Caco-2 (cell line): ENCODE measurements at regions of chr18 and their contacts with region 1.

Region 1: DNA sequence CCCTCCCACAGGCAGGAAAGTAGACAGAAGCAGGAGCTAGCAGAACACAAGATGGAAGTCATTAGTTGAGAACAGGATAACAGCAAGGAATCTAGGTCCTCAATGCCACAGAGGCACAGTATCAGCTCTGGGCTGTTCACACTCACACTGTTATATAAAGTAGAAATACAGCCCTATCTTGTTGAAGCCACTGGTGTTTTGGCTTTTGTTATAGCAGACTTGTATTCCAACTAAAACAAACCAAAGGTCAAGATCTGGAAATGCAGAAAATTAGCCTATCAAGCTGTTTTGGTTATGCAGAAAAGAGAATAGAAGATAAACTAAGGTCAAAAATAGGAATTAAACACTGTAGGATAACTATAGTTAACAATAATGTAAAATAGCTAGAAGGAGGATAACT is 37.5 kb upstream of the L3MBTL4 start:
- DNase-seq: no peak
- H3K4me3 ChIP-seq: no peak overlapping the region
- H3K4me3 Mint-ChIP-seq: no peak overlapping the region
- H3K27ac Mint-ChIP-seq: no peak overlapping the region
- H3K4me1 ChIP-seq: no peaks in the 10 kb centered on the region
- H3K4me1 Mint-ChIP-seq: peaks cover 8% of the 10 kb centered on the region
- H3K27me3 ChIP-seq: no peaks in the 10 kb centered on the region
- H3K27me3 Mint-ChIP-seq: peaks cover 8% of the 10 kb centered on the region
- CTCF ChIP-seq: no peak

Region 2: GRCh38 chr18:6355789-6356589 is 96.2 kb before region 1 on chr18:
- CTCF ChIA-PET with region 1: no interaction called
- POLR2A ChIA-PET with region 1: no interaction called
- intact Hi-C with region 1: no loop called
- DNase-seq: no peak
- H3K4me3 ChIP-seq: no peak overlapping the region
- H3K4me3 Mint-ChIP-seq: no peak overlapping the region
- H3K27ac Mint-ChIP-seq: no peak overlapping the region
- H3K4me1 ChIP-seq: no peaks in the 10 kb centered on the region
- H3K4me1 Mint-ChIP-seq: no peaks in the 10 kb centered on the region
- H3K27me3 ChIP-seq: no peaks in the 10 kb centered on the region
- H3K27me3 Mint-ChIP-seq: peaks cover 11% of the 10 kb centered on the region
- CTCF ChIP-seq: no peak

Region 3: DNA sequence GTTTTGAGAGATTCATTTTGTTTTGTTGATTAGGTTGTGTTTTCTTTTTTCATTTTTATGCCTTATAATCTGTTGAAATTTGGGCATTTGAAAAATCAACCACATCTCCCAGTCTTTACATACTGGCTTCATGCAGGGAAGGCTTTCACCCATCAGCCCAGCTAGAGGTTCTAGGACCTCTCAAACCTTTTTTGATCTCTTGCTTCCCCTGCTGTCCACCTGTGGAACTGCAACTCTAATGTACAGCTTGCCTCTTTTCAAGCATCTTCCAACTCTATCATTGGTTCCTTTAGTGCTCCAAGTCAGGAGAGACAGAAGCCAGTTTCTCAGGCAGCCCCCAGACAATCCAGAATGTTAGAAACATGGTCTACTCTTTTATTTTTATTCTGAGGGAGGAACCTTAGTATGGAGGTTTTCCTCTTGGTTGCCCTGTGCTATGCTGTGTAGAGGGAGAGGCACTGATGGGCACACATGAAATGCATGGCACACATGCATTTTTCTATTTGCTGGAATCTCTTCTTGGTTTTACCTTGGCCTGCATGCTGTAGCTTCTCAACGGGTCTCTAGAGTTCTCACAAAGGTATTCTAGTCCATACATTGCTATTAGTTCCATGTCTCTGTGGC is 69.7 kb after region 1 on chr18:
- CTCF ChIA-PET with region 1: no interaction called
- POLR2A ChIA-PET with region 1: no interaction called
- intact Hi-C with region 1: loop called (anchors 10 kb)
- DNase-seq: peak; percentile 45 to 71
- H3K4me3 ChIP-seq: no peak overlapping the region
- H3K4me3 Mint-ChIP-seq: no peak overlapping the region
- H3K27ac Mint-ChIP-seq: no peak overlapping the region
- H3K4me1 ChIP-seq: no peaks in the 10 kb centered on the region
- H3K4me1 Mint-ChIP-seq: no peaks in the 10 kb centered on the region
- H3K27me3 ChIP-seq: no peaks in the 10 kb centered on the region
- H3K27me3 Mint-ChIP-seq: peaks cover 6% of the 10 kb centered on the region
- CTCF ChIP-seq: peak; percentile 80 to 82